Activated B cell treated with CpG ODN at 0.5 μM for 24 hours (primary cell): ENCODE measurements at regions of chr3 and their contacts with region 1.

Region 1: DNA sequence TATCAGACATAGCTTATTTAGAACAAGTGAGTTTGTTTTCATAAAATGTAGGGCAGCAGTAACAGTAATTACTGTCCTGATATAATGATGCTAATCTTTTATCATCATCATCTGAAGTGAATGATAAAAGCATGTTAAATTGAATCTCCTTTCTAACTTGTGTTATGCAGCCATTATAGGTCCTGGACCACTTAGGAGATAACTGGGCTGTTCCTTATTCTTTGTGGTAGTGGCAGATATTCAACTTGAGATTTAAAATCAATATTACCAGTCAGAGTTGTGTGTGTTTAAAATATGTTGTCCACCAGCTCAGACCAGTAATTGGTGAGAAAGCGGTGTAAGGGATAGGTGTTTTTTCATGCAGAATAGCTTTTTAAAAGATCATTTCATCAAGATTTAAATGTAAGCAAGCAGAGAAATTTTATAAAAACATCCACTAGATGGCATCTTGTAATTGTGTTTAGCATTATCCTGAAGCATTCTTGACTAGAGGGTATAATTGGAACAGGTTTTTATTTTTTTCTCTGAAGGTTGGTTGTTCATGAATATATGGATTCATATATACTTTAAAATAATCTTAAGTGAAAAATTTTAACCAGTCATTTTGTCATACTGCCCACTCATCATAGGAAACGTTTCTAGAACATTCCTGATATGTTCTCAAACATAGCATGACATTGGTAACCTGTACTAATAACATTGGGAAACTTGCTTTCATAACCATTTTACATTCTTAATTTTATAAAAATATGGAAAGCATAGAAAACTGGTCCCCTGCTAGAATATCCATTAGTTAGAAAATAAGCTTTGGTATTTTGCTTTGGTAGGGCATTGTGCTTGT is 153.9 kb downstream of the BBX start:
- DNase-seq: no peak
- ATAC-seq: no peak
- H3K4me3 Mint-ChIP-seq: peak overlapping the region; percentile 42
- H3K27ac Mint-ChIP-seq: peak overlapping the region; percentile 67
- H3K4me1 Mint-ChIP-seq: peaks cover 53% of the 10 kb centered on the region
- H3K27me3 Mint-ChIP-seq: no peaks in the 10 kb centered on the region
- CTCF ChIP-seq: no peak

Region 2: GRCh38 chr3:107660306-107660976 is 16.2 kb before region 1 on chr3:
- CTCF ChIA-PET with region 1: interaction called, 36 read pairs
- POLR2A ChIA-PET with region 1: interaction called, 4 read pairs
- intact Hi-C with region 1: loop called (anchors 2 kb)
- DNase-seq: no peak
- ATAC-seq: no peak
- H3K4me3 Mint-ChIP-seq: no peak overlapping the region
- H3K27ac Mint-ChIP-seq: no peak overlapping the region
- H3K4me1 Mint-ChIP-seq: peaks cover 18% of the 10 kb centered on the region
- H3K27me3 Mint-ChIP-seq: no peaks in the 10 kb centered on the region
- CTCF ChIP-seq: peak; percentile 85

Region 3: DNA sequence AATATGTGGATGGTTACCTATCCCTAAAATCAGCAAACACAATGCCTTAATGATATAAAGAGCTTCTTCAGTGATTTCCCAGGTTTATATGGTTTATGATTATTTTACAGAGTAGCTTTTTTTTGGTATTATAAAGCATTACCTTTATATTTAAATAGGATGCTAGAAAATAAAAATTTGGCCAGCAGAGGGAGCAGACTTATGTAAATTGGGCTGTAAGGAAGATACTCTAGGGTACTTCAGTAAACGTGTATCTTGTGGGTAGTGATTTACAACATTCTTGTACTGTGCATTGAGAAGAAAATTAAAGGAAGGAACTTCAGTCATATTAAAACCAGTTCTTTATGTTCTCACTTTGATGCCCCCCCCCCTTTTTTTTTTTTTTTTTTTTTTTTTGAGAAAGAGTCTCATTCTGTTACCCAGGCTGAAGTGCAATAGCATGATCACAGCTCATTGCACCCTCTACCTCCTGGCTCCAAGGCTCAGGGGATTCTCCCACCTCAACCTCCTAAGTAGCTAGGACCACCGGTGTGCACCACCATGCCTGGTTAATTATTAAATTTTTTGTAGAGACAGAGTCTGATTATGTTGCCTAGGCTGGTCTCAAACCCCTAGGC is 13.9 kb after region 1 on chr3:
- CTCF ChIA-PET with region 1: interaction called, 44 read pairs
- POLR2A ChIA-PET with region 1: interaction called, 7 read pairs
- intact Hi-C with region 1: loop called (anchors 1 kb)
- DNase-seq: no peak
- ATAC-seq: peak; percentile 61
- H3K4me3 Mint-ChIP-seq: no peak overlapping the region
- H3K27ac Mint-ChIP-seq: no peak overlapping the region
- H3K4me1 Mint-ChIP-seq: peaks cover 6% of the 10 kb centered on the region
- H3K27me3 Mint-ChIP-seq: no peaks in the 10 kb centered on the region
- CTCF ChIP-seq: no peak

Region 4: GRCh38 chr3:107740992-107741896 is 64.6 kb after region 1 on chr3:
- CTCF ChIA-PET with region 1: interaction called, 46 read pairs
- POLR2A ChIA-PET with region 1: no interaction called
- intact Hi-C with region 1: loop called (anchors 1 kb)
- DNase-seq: no peak
- ATAC-seq: no peak
- H3K4me3 Mint-ChIP-seq: no peak overlapping the region
- H3K27ac Mint-ChIP-seq: no peak overlapping the region
- H3K4me1 Mint-ChIP-seq: peaks cover 31% of the 10 kb centered on the region
- H3K27me3 Mint-ChIP-seq: no peaks in the 10 kb centered on the region
- CTCF ChIP-seq: no peak

Region 5: DNA sequence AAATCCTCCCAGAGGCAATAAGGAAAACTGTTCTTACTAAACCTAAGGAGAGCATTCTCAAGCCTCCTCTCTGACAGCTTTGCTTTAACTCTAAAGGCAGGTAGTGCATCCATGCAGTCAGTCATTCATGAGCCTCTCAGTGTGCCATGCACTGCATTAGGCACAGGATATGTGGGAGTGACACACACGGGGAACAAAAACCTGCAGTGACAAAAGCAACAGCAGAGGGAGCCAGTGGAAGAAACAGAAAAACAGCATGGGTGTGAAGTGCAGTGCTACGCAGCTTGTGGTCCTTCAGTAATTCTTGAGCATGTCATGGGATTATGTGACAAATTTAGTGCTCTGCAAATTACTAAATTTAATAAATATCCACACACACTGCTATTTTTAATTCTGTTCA is 76.8 kb after region 1 on chr3:
- CTCF ChIA-PET with region 1: interaction called, 23 read pairs
- POLR2A ChIA-PET with region 1: no interaction called
- intact Hi-C with region 1: no loop called
- DNase-seq: no peak
- ATAC-seq: no peak
- H3K4me3 Mint-ChIP-seq: no peak overlapping the region
- H3K27ac Mint-ChIP-seq: no peak overlapping the region
- H3K4me1 Mint-ChIP-seq: no peaks in the 10 kb centered on the region
- H3K27me3 Mint-ChIP-seq: no peaks in the 10 kb centered on the region
- CTCF ChIP-seq: no peak

Region 6: DNA sequence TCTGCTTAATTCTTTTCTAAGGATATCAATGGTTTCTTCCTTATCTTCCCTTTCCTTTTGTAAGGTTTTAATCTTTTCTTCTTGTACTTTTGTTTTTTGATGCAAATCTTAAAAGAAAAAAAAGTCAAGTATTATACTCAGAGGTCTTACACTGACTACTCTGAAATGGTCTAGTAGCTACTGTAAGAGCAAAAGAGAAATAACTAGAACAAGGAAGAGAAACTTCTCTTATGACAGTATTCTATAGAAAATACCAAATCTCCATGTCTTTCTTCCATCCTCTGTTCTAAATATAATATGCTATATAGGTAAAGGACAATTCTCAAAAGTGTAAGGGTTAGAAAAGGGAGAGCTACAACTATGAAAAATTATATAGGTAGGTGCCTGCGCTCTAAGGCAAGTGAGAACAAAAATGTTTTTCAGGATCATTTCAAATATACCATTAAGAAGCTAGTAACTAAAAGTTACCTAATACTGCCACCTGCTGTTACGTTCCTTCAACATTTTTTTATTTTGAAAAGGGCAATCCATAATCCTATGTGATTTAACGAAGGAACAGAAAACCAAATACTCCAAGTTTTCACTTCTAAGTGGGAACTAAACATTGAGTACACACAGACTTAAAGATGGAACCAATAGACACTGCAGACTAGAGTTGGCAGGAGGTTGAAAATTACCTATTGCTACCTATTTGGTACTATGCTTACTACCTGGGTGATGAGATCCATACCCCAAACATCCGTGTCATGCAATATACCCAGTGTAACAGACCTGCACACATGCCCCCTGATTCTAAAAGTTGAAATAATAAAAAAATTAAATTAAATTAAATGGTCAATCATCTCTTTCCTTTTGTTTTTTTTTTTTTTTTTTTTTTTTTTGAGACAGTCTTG is 875.8 kb after region 1 on chr3:
- CTCF ChIA-PET with region 1: interaction called, 3 read pairs
- POLR2A ChIA-PET with region 1: no interaction called
- intact Hi-C with region 1: loop called (anchors 2 kb)
- DNase-seq: no peak
- ATAC-seq: peak; percentile 34
- H3K4me3 Mint-ChIP-seq: peak overlapping the region; percentile 26
- H3K27ac Mint-ChIP-seq: peak overlapping the region; percentile 77
- H3K4me1 Mint-ChIP-seq: peaks cover 8% of the 10 kb centered on the region
- H3K27me3 Mint-ChIP-seq: no peaks in the 10 kb centered on the region
- CTCF ChIP-seq: no peak

Region 7: DNA sequence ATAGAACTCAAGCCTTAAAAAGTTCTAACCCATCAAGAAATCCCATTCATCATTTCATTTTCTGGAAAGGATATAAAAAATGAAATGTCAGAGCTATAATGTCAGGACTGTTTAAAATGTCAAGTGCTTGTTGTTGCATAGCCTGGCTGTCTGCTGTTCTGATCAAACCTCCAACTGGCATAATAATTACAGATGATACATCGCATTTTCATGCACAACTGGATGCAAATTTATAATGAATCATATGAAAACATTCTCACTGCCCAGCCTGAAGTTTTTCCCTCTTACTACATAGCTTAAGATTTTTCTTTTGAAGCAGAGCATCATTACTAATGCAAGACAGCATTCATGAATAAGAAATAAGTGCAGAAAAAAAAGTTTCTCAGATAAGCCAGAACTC is 1230.5 kb after region 1 on chr3:
- CTCF ChIA-PET with region 1: no interaction called
- POLR2A ChIA-PET with region 1: no interaction called
- intact Hi-C with region 1: no loop called
- DNase-seq: no peak
- ATAC-seq: no peak
- H3K4me3 Mint-ChIP-seq: no peak overlapping the region
- H3K27ac Mint-ChIP-seq: no peak overlapping the region
- H3K4me1 Mint-ChIP-seq: no peaks in the 10 kb centered on the region
- H3K27me3 Mint-ChIP-seq: peaks cover 7% of the 10 kb centered on the region
- CTCF ChIP-seq: no peak